HEK293 (cell line): ENCODE measurements at regions of chr5 and their contacts with region 1.

Region 1: GRCh38 chr5:102547141-102548035 is 48.6 kb upstream of the SLCO6A1 start:
- H3K4me3 ChIP-seq: no peak overlapping the region
- H3K27ac ChIP-seq: no peak overlapping the region
- H3K4me1 ChIP-seq: no peaks in the 10 kb centered on the region
- CTCF ChIP-seq: no peak

Region 2: DNA sequence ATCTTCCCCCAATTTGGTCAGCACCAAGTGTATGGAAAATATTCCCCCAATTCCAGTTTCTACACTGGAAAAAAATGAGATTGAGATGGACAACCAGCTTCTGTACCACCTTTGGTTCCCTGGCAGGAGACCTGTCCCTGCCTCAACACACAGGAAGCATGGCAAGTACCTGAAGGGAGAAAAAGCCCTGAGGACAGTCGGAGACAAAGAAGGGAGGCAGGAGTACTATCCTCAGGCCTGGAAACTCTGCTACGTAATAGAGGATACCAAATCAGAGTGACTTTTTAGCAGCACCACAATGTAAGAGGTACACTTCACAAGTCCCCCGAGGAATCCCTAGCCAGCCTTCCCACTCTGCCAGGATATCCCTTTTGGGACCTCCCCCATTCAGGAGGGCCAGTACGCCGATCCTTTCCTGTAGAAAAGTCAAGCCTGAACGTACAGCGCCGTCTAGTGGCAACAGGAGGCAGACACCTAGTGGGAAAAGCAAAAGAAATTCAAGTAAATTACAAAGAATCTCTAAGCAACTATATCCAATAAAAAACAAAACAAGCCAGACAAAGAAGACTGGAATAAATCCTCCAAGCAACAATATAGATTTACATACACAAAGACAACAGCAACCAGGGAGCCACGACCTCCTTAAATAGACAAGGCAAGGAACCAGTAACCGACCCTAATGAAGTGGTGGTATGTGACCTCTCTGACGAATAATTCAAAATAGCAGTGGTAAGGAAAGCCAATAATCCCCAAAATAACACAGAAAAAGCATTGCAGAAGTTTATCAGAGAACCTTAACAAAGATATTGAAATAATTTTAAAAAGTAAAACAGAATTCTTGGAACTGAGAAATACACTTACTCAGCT is 14.7 kb after region 1 on chr5:
- CTCF ChIA-PET with region 1: interaction called, 13 read pairs
- POLR2A ChIA-PET with region 1: no interaction called
- H3K4me3 ChIP-seq: no peak overlapping the region
- H3K27ac ChIP-seq: no peak overlapping the region
- H3K4me1 ChIP-seq: no peaks in the 10 kb centered on the region
- CTCF ChIP-seq: 0 out of 2 replicates have a peak, but pooled peaks have one; percentile 12